CD14-positive monocyte (primary cell): ENCODE measurements at regions of chr9 and their contacts with region 1.

Region 1: GRCh38 chr9:98897745-98898144 is 46.0 kb upstream of the COL15A1 start:
- DNase-seq: no peak
- H3K4me3 ChIP-seq: no peak overlapping the region
- H3K4me3 Mint-ChIP-seq: no peak overlapping the region
- H3K27ac ChIP-seq: no peak overlapping the region
- H3K27ac Mint-ChIP-seq: no peak overlapping the region
- H3K4me1 ChIP-seq: peaks cover 11 to 17% of the 10 kb centered on the region in 2 donors
- H3K4me1 Mint-ChIP-seq: peaks cover 29% of the 10 kb centered on the region
- H3K27me3 ChIP-seq: no peaks in the 10 kb centered on the region
- H3K27me3 Mint-ChIP-seq: peaks cover 0 to 9% (median 0%) of the 10 kb centered on the region in 3 donors
- CTCF ChIP-seq: no peak

Region 2: DNA sequence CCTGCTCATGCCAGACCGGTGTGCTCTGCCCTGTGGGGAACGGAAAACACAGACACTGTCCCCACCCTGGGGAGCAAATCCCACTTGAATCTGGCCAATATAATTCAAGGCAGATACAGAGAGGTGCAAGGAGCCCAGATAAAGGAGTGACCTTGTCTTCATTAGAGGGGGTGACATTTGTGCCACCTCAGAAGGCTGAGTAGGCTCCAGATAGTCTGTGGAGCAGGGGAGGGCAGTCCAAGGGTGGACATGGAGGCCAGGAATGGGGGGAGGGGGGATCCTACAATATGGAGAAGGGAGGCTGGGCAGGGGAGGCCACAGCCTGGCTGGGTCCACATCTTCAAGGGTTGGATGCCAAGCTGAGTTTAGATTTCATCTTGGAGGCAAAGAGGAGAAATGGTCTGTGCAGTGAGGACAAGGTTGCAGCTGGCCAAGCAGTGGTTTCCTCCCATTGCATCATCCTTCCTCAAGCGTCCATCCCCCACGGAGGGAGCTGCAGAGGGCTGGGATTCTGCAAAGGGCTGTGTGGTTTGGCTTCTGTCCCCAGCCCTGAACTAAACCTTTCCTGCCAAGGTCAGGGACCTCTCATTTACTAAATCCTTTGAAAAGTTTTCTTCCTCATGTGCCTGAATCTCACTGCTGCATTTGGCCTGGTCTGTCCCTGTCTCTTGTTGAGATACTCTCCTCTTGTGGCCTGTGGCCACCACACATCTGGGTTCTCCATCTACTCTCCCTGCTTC is 30.1 kb before region 1 on chr9:
- intact Hi-C with region 1: loop called in 1 of 2 experiments (anchors 2 kb)
- DNase-seq: peak; percentile 11 to 33 (median 16)
- H3K4me3 ChIP-seq: peak overlapping the region in 1 of 3 experiments; percentile 64
- H3K4me3 Mint-ChIP-seq: peak overlapping the region; percentile 42 to 69
- H3K27ac ChIP-seq: peak overlapping the region; percentile 30 to 57
- H3K27ac Mint-ChIP-seq: peak overlapping the region in 5 of 7 donors; percentile 40 to 75 (median 59)
- H3K4me1 ChIP-seq: peaks cover 36 to 41% of the 10 kb centered on the region in 2 donors
- H3K4me1 Mint-ChIP-seq: peaks cover 64% of the 10 kb centered on the region
- H3K27me3 ChIP-seq: no peaks in the 10 kb centered on the region
- H3K27me3 Mint-ChIP-seq: peaks cover 0 to 4% (median 3%) of the 10 kb centered on the region in 3 donors
- CTCF ChIP-seq: no peak

Region 3: DNA sequence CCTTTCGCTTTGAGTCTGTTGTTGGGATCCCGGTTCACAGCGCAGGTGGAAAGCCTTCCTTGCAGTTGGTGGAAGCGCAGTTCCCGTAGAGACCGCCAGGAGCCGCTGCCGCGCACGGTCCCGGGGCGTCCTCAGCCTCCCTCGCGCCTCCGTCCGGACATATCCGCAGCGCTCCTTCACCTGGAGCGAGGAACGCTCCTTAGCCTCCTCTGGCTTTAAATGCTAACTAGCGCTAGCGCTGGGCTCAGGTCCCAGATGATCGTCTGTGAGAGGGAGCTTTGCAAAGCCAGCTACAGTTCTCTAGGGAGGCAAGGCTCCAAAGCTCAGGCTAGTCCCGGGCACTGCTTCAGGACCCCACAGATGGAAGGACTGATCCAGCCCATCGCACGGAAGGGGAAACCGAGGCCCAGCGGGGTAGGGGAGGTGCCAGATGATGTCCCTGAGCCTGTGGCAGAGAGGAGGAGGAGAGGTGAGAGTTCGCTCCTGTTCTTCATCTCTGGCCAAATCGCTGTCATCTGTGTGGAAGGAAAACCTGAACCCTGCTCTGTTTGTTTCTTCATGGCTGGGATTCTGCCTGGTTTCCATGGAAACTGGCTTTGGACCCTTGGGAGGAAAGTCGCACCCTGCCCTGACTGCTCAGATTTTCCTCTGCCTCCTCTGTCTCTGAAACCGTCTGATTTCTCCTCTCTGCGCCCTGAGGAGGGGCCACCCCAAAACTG is 77.4 kb after region 1 on chr9:
- intact Hi-C with region 1: no loop called
- DNase-seq: peak; percentile 53 to 63 (median 60)
- H3K4me3 ChIP-seq: no peak overlapping the region
- H3K4me3 Mint-ChIP-seq: peak overlapping the region in 1 of 2 donors; percentile 80
- H3K27ac ChIP-seq: no peak overlapping the region
- H3K27ac Mint-ChIP-seq: peak overlapping the region in 2 of 7 donors; percentile 12 to 35
- H3K4me1 ChIP-seq: peaks cover 4 to 6% of the 10 kb centered on the region in 2 donors
- H3K4me1 Mint-ChIP-seq: peaks cover 9% of the 10 kb centered on the region
- H3K27me3 ChIP-seq: peaks cover 5 to 16% of the 10 kb centered on the region in 2 donors
- H3K27me3 Mint-ChIP-seq: peaks cover 17 to 43% (median 30%) of the 10 kb centered on the region in 3 donors
- CTCF ChIP-seq: peak; percentile 98